ENCODE measurements at regions of chr19 and their contacts with region 1.

Region 1: DNA sequence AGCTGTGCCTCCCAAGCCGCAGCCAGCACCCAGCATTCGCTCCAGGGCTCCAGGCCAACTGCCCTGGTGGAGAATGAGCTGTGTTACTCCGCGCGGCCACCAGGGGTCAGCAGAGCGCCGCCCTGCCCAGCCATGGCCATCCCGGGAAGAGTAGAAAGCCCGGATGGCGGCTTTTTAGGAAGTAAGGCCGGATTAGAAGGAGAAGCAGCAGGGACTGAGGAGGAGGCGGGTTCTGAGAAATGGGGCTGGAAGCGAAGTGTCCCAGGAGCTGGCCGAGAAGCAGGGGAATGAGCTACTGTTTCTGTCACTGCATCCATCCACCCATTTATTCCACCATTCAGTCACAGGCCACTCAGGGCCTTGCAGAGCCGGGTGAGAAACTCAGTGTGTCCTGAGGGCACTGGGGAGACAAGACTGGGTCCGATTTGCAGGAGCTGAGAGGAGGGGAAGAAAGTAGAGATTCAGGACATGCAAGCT is 6.6 kb upstream of the NPAS1 start:
- H3K4me3 ChIP-seq: no peak overlapping the region
- H3K27ac ChIP-seq: no peak overlapping the region
- H3K4me1 ChIP-seq: no peaks in the 10 kb centered on the region
- CTCF ChIP-seq: peak; percentile 95

Region 2: DNA sequence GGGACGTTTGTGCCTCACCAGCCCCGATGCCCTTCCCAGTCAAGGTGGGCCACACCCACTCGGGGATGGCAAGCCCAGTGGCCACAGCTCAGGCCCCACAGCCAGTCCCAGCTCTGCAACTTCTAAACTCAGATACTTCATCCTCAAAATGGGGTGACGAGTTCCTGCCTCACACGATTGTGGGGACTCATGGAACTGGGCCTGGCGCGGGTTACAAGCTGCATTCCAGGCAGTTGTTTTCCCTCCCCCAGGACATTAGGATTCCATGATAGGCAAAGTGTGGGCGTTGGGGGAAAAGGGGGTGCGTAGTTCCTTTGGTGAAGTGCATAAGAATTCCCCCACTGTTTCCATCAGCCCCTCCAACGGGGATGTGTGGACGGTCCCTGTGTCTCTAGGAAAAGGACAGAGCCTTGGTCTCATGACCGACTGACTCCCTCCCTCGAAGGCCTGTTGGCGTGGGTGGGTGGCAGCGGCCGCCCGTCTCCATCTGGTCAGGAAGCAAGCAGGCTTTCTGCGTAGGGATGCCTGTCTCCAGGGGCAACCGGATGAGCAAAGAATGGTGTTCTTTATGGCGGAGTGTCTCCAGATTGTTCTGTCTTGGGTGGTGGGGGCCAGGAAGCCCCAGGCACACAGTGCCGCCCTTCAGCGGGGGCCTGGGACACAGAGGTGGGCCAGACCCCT is 14.5 kb before region 1 on chr19:
- CTCF ChIA-PET with region 1: interaction called, 34 read pairs
- POLR2A ChIA-PET with region 1: interaction called, 4 read pairs
- H3K4me3 ChIP-seq: no peak overlapping the region
- H3K27ac ChIP-seq: no peak overlapping the region
- H3K4me1 ChIP-seq: no peaks in the 10 kb centered on the region
- CTCF ChIP-seq: no peak

Region 3: GRCh38 chr19:47026156-47026555 is 13.1 kb after region 1 on chr19:
- CTCF ChIA-PET with region 1: interaction called, 72 read pairs
- POLR2A ChIA-PET with region 1: interaction called, 4 read pairs
- H3K4me3 ChIP-seq: no peak overlapping the region
- H3K27ac ChIP-seq: no peak overlapping the region
- H3K4me1 ChIP-seq: peaks cover 7% of the 10 kb centered on the region
- CTCF ChIP-seq: no peak

Region 4: GRCh38 chr19:47035127-47036096 is 22.3 kb after region 1 on chr19:
- CTCF ChIA-PET with region 1: interaction called, 72 read pairs
- POLR2A ChIA-PET with region 1: interaction called, 3 read pairs
- H3K4me3 ChIP-seq: peak overlapping the region; percentile 40
- H3K27ac ChIP-seq: peak overlapping the region; percentile 80
- H3K4me1 ChIP-seq: peaks cover 17% of the 10 kb centered on the region
- CTCF ChIP-seq: peak; percentile 97

Region 5: DNA sequence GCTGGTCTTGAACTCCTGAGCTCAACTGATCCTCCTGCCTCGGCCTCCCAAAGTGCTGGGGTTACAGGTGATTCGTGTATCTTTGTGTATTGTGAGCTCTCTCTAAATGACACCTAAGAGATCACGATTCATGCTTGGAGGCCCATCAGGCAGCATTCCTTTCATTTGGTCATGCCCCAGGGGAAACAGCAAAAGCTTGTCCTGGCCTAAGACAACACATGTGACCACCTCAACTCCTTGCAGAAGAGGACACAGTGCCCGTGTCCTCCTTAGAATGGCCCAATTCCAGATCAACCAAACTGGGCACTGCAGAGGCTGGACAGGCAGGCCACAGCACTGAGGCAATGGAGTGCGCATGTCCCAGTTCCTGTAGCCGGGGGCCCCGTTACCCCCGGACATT is 68.0 kb after region 1 on chr19:
- CTCF ChIA-PET with region 1: interaction called, 13 read pairs
- POLR2A ChIA-PET with region 1: no interaction called
- H3K4me3 ChIP-seq: no peak overlapping the region
- H3K27ac ChIP-seq: peak overlapping the region; percentile 37; the same call in 1 of the 2 replicates
- H3K4me1 ChIP-seq: no peaks in the 10 kb centered on the region
- CTCF ChIP-seq: no peak

Region 6: GRCh38 chr19:47124937-47125668 is 112.0 kb after region 1 on chr19:
- CTCF ChIA-PET with region 1: interaction called, 22 read pairs
- POLR2A ChIA-PET with region 1: interaction called, 4 read pairs
- H3K4me3 ChIP-seq: no peak overlapping the region
- H3K27ac ChIP-seq: no peak overlapping the region
- H3K4me1 ChIP-seq: no peaks in the 10 kb centered on the region
- CTCF ChIP-seq: peak; percentile 44; the same call in 1 of the 2 replicates

Region 7: DNA sequence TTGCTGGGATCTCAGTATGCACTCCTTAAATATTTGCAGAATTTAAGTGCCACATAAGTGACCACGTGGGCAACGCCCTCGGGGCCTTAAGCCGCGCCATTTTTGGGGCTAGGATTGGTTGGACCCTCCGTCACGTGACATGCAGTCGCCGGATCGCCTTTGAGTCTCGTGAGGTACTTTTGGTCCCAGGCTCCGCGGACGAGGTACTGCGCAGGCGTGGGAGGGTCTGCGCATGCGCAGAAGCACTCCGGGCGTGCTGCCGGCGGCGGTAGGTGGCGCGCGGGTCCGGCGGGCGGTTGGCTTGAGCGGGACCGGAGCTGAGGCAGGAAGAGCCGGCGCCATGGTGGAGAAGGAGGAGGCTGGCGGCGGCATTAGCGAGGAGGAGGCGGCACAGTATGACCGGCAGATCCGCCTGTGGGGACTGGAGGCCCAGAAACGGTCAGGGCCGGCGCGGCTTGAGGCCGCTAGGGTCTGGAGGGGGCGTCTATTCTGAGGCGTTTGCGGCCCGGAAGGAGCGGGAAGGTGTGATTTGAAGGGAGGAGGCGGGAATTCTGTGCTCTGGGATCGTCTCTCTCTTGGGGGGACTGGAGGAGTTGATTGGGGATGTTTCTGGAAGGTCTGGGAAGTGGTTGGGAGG is 117.6 kb after region 1 on chr19 and contains the start of gene SAE1:
- CTCF ChIA-PET with region 1: interaction called, 22 read pairs
- POLR2A ChIA-PET with region 1: interaction called, 4 read pairs
- H3K4me3 ChIP-seq: peak within 1 kb of the TSS; percentile 75
- H3K27ac ChIP-seq: peak within 1 kb of the TSS; percentile 92
- H3K4me1 ChIP-seq: peaks cover 22% of the 10 kb centered on the region
- CTCF ChIP-seq: peak; percentile 97